ENCODE measurements at regions of chr5 and their contacts with region 1.

Region 1: DNA sequence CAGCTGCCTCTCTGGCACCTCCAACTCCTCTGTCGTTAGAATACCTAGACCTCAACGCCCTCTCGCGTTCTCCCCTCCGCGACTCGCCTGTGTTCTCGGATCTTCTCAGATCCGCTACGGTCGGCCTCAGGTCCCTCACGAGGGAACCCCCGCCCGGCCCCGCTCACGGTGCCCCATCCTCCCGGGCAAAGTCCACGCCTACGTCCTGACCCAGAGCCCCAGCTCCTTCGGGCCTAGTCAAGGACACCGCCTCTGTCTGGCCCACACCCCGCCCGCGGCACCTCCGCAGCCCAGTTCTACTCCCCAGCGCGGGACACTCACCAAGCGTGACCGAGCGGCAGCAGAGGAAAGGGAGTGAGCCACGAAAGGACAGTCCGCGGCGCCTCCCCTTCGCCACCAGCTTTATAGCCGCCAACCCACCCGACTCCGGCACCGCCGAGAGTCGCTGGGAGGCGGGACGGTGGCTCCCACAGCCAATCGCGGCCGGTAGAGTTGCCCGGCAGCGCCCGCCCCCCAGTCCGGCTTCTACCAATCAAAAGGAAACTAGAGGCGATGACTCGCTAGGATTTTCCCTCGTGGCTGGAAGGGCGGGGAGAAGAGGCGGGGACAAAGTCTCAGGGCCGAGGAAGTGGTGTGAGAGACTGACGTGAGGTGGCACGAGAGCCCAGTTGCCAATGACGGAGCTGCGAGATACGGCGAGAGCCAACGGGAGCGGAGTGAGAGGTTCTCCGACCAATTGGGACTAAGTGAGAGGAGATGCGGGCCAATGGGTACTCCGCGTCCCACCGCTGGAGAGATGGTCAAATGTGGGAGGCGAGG is at the start of gene HMGCS1:
- DNase-seq: peak; percentile 99
- total RNA-seq, gene HMGCS1: 32.2 to 41.2 TPM

Region 2: GRCh38 chr5:42612750-42613366 is 700.4 kb before region 1 on chr5:
- intact Hi-C with region 1: loop called in 1 of 2 experiments (anchors 5 kb)
- DNase-seq: no peak

Region 3: GRCh38 chr5:43019614-43020293 is 293.5 kb before region 1 on chr5:
- intact Hi-C with region 1: no loop called
- DNase-seq: peak; percentile 84

Region 4: DNA sequence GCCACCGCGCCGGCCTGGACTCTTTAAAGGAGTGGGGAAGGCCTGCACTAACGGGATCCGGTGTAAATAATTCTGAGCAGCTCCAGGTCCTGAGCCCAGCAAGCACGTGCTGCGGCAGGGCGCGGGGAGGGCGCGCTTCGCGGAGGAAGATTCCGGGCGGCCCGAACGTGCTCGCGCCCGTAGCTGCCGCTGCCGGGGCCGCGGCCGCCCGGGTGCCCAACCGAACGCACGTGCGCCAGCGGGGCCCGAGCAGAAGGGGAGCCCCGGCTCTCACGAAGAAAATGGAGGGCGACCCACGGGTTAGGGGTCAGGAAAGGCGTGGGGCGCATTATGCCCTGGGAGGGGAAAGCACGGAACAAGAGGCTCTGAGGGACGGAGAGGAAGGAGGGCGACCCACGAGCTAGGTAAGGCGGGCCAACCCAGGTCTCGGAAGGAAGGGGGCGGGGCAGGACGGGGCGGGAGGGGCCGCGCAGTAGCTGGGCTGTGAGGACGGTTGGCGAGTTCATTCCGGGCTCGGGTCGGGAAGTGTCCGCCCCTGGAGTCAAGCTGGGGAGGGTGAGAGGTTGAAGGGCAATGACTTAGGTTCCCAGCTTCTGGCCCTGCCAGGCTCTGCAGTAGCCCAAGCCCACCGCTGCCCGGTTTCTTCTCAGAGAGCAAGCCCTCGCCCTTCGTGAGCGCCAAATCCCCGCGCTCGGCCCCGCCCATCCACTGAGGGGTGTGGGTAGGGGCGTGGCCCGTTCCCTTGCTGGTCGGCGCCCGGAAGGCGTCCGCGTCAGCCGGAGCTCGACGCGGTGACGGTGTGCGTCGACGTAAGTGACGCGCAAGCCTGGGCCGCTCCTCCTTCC is 192.3 kb before region 1 on chr5 and contains the start of gene ZNF131:
- intact Hi-C with region 1: loop called in 1 of 2 experiments (anchors 10 kb)
- DNase-seq: peak; percentile 99
- total RNA-seq, gene ZNF131: 36.0 to 37.8 TPM

Region 5: DNA sequence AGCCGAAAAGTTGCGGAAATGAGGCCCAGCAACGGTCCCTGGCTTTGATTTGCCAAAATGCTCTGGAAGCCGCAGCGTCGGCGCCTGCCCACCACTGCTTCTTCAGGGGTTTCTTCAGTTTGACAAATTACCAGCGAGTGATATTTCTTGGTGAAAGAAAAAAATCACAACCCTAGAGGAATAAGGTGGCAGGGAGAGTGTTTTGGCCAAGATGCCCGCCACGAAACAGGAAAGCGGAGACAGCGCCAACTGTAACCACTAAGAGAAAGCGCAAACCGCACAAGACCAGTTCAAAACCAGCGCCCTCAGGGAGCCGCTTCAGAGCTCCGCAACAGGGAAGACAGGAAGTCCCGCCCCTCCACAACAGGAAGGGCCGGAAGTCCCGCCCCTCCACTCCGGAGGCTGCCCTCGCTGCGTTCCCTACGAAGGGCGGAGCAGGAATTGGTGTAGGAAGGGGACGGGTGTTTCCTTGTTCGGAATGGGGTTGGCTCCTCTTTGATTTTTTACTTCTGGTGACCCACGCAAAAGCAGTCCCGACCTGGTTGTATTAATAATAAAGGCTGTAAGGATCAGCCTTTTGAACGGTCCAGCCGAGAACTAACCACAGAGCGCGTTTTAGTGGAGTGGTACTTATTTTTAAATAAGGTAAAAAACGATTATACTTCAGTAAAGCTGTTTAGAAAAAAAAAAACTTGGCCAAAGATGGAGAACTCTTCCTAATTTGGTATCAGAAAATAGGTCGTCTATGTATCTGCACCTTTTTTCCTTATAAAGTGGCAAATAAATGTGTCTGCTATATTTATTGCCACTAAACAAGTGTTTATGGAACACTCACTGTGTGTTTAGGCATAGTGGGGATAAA is 201.8 kb after region 1 on chr5 and contains the start of gene C5orf34:
- intact Hi-C with region 1: loop called in 1 of 2 experiments (anchors 10 kb)
- DNase-seq: peak; percentile 99
- total RNA-seq, gene C5orf34: 1.5 to 2.3 TPM

Measured in posterior vena cava (tissue), 2 donors.